ENCODE measurements at regions of chr3 and their contacts with region 1.

Region 1: DNA sequence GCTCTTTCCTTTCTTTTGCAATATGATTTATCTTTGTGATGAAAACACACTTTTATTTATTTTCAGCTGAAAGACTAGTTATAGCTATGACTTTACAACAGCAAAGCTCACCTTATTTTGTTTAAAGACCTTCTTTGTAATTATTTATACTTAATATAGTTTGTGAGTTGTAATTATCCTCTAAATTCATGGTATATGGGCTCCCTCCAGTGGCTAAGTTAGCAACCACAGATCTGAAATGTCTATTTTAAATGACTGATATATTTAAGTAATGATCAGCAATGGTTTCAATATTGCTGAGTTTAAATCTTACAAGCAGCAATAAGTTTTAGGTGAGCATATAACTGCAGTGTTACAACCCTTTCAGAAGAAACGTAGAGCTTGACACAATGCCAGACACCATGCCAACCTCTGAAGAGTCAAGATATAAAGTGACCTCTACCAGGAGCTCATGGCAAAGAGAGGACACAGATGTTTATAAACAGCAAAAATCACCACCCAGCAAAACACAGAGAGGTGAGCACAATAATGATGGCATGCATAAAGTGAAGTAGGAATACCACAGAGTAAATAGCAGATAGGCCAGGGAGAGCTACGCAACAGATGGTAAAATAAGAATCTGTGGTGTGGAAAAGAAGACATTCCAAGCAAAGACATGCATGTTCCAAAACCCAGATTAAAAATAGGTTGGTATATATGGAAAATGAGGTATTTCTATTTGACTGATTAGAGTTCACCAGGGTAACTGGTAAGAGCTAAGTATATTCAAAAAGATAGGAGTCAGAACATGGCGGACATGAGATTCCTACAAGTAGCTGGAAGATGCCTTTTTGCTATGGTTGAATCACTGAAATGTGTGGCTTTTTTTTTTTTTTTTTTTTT is 143.7 kb upstream of the ZNF385D start:
- DNase-seq: no peak
- H3K4me3 ChIP-seq: no peak overlapping the region
- CTCF ChIP-seq: no peak

Region 2: GRCh38 chr3:20340324-20340928 is 1554.3 kb before region 1 on chr3:
- CTCF ChIA-PET with region 1: interaction called, 27 read pairs
- POLR2A ChIA-PET with region 1: no interaction called
- DNase-seq: peak; percentile 24
- H3K4me3 ChIP-seq: no peak overlapping the region
- CTCF ChIP-seq: peak; percentile 86

Region 3: DNA sequence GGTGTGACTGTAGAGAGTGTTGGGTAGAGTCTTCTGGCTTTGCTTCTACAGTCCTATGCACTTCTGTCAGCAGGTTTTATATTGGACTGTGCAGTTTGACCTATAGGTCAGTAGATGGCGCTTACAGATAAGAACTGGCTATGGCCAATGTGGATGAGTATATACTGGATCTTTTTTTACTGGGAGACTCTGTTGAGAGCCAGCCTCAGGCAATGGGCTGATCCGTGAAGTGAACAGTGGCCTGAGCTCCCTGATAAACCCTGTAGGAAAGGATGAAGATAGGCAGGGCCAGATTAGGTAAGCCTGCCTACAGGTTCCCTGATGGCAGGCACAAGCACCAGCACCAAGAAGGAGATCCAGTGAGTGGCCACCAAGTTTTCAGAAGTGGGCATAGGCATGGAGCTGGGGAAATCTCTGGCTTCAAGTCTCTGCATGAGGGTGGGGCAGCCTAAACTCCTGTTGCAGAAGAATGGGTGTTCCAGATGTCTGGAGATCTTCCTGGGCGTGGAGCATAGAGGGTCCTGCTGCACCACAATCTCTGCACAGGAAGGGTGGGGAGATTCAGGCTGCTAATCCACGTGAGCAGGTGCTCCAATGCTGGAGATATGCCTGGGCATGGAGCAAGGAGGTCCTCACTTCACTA is 1382.7 kb before region 1 on chr3:
- CTCF ChIA-PET with region 1: interaction called, 10 read pairs
- POLR2A ChIA-PET with region 1: no interaction called
- DNase-seq: peak; percentile 34
- H3K4me3 ChIP-seq: no peak overlapping the region
- CTCF ChIP-seq: peak; percentile 68

Region 4: GRCh38 chr3:21909096-21909495 is 14.4 kb after region 1 on chr3:
- CTCF ChIA-PET with region 1: interaction called, 10 read pairs
- POLR2A ChIA-PET with region 1: no interaction called
- DNase-seq: no peak
- H3K4me3 ChIP-seq: no peak overlapping the region
- CTCF ChIP-seq: no peak

Region 5: GRCh38 chr3:21920421-21920861 is 25.7 kb after region 1 on chr3:
- CTCF ChIA-PET with region 1: interaction called, 11 read pairs
- POLR2A ChIA-PET with region 1: no interaction called
- DNase-seq: peak; percentile 72
- H3K4me3 ChIP-seq: no peak overlapping the region
- CTCF ChIP-seq: no peak

Region 6: GRCh38 chr3:22068619-22069018 is 173.9 kb after region 1 on chr3:
- CTCF ChIA-PET with region 1: no interaction called
- POLR2A ChIA-PET with region 1: no interaction called
- DNase-seq: no peak
- H3K4me3 ChIP-seq: no peak overlapping the region
- CTCF ChIP-seq: no peak

Region 7: DNA sequence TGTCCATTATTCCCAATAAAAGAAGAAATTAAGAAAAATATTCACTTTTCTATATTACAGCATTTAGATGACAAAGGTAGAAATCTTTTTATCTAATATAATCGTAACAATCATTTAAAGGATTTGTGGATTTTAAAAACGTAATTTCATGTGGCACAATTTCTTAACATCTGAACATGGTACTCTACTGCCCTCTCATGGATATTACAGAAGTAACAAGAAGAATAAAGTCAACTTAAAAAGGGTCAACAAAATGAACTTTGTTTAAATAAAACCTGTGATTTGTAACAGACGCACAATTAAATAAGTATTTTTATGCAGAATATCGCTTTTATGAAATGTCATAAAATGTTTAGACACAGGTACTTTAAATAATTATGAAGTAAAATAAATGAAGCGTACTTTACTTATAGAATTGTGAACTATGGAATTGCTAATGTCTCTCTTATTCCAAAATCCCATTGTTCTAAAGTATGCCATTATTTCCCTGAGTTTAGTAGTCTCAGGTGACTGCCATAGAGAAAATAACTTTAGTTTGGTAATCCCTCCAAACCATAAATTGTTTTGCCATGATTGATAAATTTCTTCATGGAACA is 223.1 kb after region 1 on chr3:
- CTCF ChIA-PET with region 1: interaction called, 18 read pairs
- POLR2A ChIA-PET with region 1: no interaction called
- DNase-seq: peak; percentile 3
- H3K4me3 ChIP-seq: no peak overlapping the region
- CTCF ChIP-seq: peak; percentile 26

Measured in AG04449 (cell line).